ENCODE measurements at regions of chr10 and their contacts with region 1.

Region 1: DNA sequence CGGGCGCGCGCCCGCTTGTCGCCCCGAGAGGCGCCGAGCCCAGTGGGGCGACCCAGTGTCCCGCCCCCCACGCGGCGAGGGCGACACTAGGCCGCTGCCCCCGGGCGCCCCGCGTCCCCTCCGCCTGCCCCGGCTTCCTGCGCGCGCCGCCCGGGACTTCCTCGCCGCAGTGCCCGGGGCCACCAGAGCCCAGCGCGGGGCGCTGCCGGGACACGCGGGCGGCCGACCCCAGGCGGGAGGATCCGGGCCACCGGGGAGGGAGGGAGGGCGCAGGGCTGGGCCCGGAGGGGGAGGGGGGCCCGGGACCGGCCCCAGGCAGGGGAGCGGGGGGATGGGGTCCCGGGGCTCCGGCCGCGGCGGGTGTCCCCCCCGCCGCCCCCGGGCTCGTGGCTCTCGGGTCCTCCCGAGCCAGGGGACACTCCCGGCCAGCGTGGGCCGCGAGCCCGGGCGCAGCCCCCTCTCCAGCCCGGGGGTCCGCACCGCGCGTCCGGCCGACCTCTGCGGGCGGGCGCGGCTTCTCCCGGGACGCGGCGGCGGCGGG is 435 bp upstream of the PWWP2B start:
- DNase-seq: peak; percentile 75 to 85
- ATAC-seq: peak; percentile 72 to 82 (median 73)
- H3K4me3 ChIP-seq: no peak overlapping the region
- H3K4me3 Mint-ChIP-seq: peak overlapping the region; percentile 37
- H3K27ac ChIP-seq: peak overlapping the region; percentile 72
- H3K27ac Mint-ChIP-seq: peak overlapping the region in 1 of 2 donors; percentile 86
- H3K4me1 ChIP-seq: peaks cover 65% of the 10 kb centered on the region
- H3K4me1 Mint-ChIP-seq: peaks cover 10 to 53% of the 10 kb centered on the region in 2 donors
- H3K27me3 ChIP-seq: no peaks in the 10 kb centered on the region
- H3K27me3 Mint-ChIP-seq: no peaks in the 10 kb centered on the region
- CTCF ChIP-seq: peak; percentile 17

Region 2: GRCh38 chr10:132382231-132382922 is 14.2 kb before region 1 on chr10:
- intact Hi-C with region 1: no loop called
- DNase-seq: no peak
- ATAC-seq: peak in 2 of 3 donors; percentile 45 to 52
- H3K4me3 ChIP-seq: no peak overlapping the region
- H3K4me3 Mint-ChIP-seq: no peak overlapping the region
- H3K27ac ChIP-seq: peak overlapping the region; percentile 38
- H3K27ac Mint-ChIP-seq: peak overlapping the region; percentile 8 to 44
- H3K4me1 ChIP-seq: peaks cover 15% of the 10 kb centered on the region
- H3K4me1 Mint-ChIP-seq: peaks cover 17 to 20% of the 10 kb centered on the region in 2 donors
- H3K27me3 ChIP-seq: no peaks in the 10 kb centered on the region
- H3K27me3 Mint-ChIP-seq: peaks cover 0 to 3% of the 10 kb centered on the region in 2 donors
- CTCF ChIP-seq: no peak

Region 3: GRCh38 chr10:132421392-132421877 is 24.9 kb after region 1 on chr10:
- intact Hi-C with region 1: loop called (anchors 2 kb)
- DNase-seq: peak; percentile 49
- ATAC-seq: peak; percentile 57 to 73 (median 61)
- H3K4me3 ChIP-seq: no peak overlapping the region
- H3K4me3 Mint-ChIP-seq: peak overlapping the region; percentile 69
- H3K27ac ChIP-seq: peak overlapping the region; percentile 99
- H3K27ac Mint-ChIP-seq: peak overlapping the region; percentile 38 to 97
- H3K4me1 ChIP-seq: peaks cover 78% of the 10 kb centered on the region
- H3K4me1 Mint-ChIP-seq: peaks cover 18 to 40% of the 10 kb centered on the region in 2 donors
- H3K27me3 ChIP-seq: no peaks in the 10 kb centered on the region
- H3K27me3 Mint-ChIP-seq: no peaks in the 10 kb centered on the region
- CTCF ChIP-seq: no peak

Region 4: GRCh38 chr10:132469197-132469884 is 72.8 kb after region 1 on chr10:
- intact Hi-C with region 1: no loop called
- DNase-seq: no peak
- ATAC-seq: no peak
- H3K4me3 ChIP-seq: no peak overlapping the region
- H3K4me3 Mint-ChIP-seq: no peak overlapping the region
- H3K27ac ChIP-seq: no peak overlapping the region
- H3K27ac Mint-ChIP-seq: no peak overlapping the region
- H3K4me1 ChIP-seq: no peaks in the 10 kb centered on the region
- H3K4me1 Mint-ChIP-seq: no peaks in the 10 kb centered on the region
- H3K27me3 ChIP-seq: no peaks in the 10 kb centered on the region
- H3K27me3 Mint-ChIP-seq: peaks cover 7 to 8% of the 10 kb centered on the region in 2 donors
- CTCF ChIP-seq: no peak

Region 5: GRCh38 chr10:132571650-132572535 is 175.3 kb after region 1 on chr10:
- intact Hi-C with region 1: loop called (anchors 10 kb)
- DNase-seq: peak; percentile 48 to 50
- ATAC-seq: peak; percentile 42 to 60 (median 58)
- H3K4me3 ChIP-seq: no peak overlapping the region
- H3K4me3 Mint-ChIP-seq: no peak overlapping the region
- H3K27ac ChIP-seq: peak overlapping the region; percentile 68
- H3K27ac Mint-ChIP-seq: no peak overlapping the region
- H3K4me1 ChIP-seq: peaks cover 54% of the 10 kb centered on the region
- H3K4me1 Mint-ChIP-seq: peaks cover 5 to 18% of the 10 kb centered on the region in 2 donors
- H3K27me3 ChIP-seq: no peaks in the 10 kb centered on the region
- H3K27me3 Mint-ChIP-seq: no peaks in the 10 kb centered on the region
- CTCF ChIP-seq: peak; percentile 14